GM13977 (cell line): ENCODE measurements at regions of chr4 and their contacts with region 1.

Region 1: GRCh38 chr4:147590249-147590920 is 26.8 kb upstream of the TMEM184C start:
- DNase-seq: peak; percentile 63
- CTCF ChIP-seq: peak; percentile 84

Region 2: DNA sequence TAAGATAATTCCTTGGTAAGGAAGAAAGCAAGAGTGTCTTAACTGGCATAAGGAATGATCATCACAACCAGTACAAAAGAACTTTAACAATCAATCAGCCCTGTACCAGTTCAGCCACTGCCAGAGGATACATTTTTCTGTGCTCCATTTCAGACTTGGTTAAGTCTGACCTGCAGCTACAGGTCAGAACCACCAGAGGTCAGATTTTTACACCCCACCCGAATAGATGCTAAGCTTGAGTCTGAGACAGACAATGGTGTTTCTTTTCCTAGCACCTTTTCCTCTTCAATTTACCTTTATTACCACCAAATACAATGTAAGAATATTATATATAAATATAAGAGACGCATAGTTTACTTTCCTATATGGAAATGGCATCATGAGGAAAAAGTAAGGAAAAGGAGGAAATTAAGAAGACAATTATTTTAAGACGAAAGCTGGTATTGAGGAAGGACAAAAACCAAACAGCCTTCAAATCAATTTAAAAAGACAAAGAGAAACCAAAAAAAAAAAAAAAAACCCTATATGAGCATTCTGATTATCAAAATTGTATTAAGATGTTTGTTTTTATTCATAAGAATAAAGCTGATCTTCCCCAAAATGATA is 429.4 kb before region 1 on chr4:
- in situ Hi-C with region 1: loop called (anchors 25 kb)
- DNase-seq: peak; percentile 72
- CTCF ChIP-seq: peak; percentile 76

Region 3: GRCh38 chr4:148007303-148007702 is 416.9 kb after region 1 on chr4:
- in situ Hi-C with region 1: no loop called
- DNase-seq: no peak
- CTCF ChIP-seq: no peak